ENCODE measurements at regions of chr15 and their contacts with region 1.

Region 1: DNA sequence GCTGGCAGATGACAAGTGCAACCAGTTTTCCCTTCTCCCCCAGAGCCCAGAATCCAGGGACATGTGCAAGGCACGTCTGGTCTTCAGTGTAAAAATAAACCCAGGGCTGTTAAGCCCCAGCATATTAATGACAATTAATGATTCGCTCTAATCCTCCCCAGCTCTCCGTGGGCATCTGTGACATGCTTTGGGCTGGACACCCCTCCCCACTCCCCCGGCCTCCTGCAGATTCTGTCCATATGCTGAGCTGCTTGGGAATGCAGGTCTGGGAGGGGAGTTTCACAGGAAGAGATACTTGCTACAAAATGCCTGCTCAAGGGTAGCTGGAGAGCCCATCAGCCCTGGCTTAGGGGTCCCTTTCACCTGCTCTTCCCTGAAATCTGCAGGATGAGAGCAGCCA is 43.0 kb upstream of the NTRK3 start:
- DNase-seq: no peak
- H3K4me3 ChIP-seq: no peak overlapping the region
- H3K27ac ChIP-seq: no peak overlapping the region
- H3K4me1 ChIP-seq: peaks cover 6 to 18% (median 9%) of the 10 kb centered on the region in 4 experiments
- H3K27me3 ChIP-seq: no peaks in the 10 kb centered on the region
- CTCF ChIP-seq: no peak
- EP300 ChIP-seq: no peak
- POLR2A ChIP-seq: no peak
- RAD21 ChIP-seq: no peak

Region 2: DNA sequence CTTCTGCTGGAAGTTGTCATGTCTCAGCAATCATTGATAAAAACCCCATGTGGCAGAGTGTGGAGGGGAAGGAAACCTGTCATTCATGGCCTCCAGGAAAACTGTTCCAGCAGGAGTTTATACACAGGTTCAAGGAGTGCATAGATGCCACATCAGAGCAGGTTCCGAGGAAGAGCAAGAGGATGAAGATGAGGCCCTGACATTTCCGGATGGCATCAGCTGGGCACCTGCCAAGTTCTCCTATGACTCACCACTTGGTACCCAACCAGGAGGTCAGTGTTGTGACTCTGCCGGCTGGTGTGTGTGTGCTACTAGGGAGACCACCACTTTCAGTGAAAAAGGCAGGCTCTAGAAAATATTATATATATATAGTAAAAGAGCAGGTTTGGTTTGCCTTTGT is 112.3 kb before region 1 on chr15:
- CTCF ChIA-PET with region 1: no interaction called
- POLR2A ChIA-PET with region 1: no interaction called
- DNase-seq: no peak
- H3K4me3 ChIP-seq: no peak overlapping the region
- H3K27ac ChIP-seq: no peak overlapping the region
- H3K4me1 ChIP-seq: no peaks in the 10 kb centered on the region
- H3K27me3 ChIP-seq: no peaks in the 10 kb centered on the region
- CTCF ChIP-seq: no peak
- EP300 ChIP-seq: no peak
- POLR2A ChIP-seq: no peak
- RAD21 ChIP-seq: no peak

Region 3: DNA sequence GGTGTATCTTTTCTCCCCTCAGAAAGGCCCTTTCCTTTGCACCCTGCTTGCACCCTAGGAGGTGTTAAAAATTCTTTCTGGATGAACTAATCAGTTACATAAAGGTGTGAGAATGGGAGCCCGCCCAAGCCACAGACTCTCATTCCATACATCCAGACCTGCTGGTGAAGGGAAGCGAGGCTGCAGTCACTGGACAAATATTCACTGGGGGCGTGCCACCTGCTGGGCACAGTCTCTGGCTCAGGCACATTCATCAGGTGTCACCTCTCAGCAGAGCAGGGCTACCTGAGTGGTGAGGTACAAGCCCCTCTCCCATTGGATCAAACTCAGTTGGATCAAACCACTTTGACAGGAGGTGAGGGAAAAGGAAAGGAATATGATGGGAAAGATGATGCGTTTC is 94.9 kb before region 1 on chr15:
- CTCF ChIA-PET with region 1: no interaction called
- POLR2A ChIA-PET with region 1: no interaction called
- DNase-seq: no peak
- H3K4me3 ChIP-seq: no peak overlapping the region
- H3K27ac ChIP-seq: no peak overlapping the region
- H3K4me1 ChIP-seq: peaks cover 0 to 6% (median 4%) of the 10 kb centered on the region in 4 experiments; a peak in 2 of 7 replicates
- H3K27me3 ChIP-seq: no peaks in the 10 kb centered on the region
- CTCF ChIP-seq: no peak
- EP300 ChIP-seq: no peak
- POLR2A ChIP-seq: no peak
- RAD21 ChIP-seq: no peak

Region 4: GRCh38 chr15:88312941-88313579 is 13.6 kb after region 1 on chr15:
- CTCF ChIA-PET with region 1: interaction called, 10 read pairs
- POLR2A ChIA-PET with region 1: interaction called, 3 read pairs
- DNase-seq: no peak
- H3K4me3 ChIP-seq: no peak overlapping the region
- H3K27ac ChIP-seq: no peak overlapping the region
- H3K4me1 ChIP-seq: no peaks in the 10 kb centered on the region
- H3K27me3 ChIP-seq: no peaks in the 10 kb centered on the region
- CTCF ChIP-seq: no peak
- EP300 ChIP-seq: no peak
- POLR2A ChIP-seq: no peak
- RAD21 ChIP-seq: no peak